ENCODE measurements at regions of chr10 and their contacts with region 1.

Region 1: DNA sequence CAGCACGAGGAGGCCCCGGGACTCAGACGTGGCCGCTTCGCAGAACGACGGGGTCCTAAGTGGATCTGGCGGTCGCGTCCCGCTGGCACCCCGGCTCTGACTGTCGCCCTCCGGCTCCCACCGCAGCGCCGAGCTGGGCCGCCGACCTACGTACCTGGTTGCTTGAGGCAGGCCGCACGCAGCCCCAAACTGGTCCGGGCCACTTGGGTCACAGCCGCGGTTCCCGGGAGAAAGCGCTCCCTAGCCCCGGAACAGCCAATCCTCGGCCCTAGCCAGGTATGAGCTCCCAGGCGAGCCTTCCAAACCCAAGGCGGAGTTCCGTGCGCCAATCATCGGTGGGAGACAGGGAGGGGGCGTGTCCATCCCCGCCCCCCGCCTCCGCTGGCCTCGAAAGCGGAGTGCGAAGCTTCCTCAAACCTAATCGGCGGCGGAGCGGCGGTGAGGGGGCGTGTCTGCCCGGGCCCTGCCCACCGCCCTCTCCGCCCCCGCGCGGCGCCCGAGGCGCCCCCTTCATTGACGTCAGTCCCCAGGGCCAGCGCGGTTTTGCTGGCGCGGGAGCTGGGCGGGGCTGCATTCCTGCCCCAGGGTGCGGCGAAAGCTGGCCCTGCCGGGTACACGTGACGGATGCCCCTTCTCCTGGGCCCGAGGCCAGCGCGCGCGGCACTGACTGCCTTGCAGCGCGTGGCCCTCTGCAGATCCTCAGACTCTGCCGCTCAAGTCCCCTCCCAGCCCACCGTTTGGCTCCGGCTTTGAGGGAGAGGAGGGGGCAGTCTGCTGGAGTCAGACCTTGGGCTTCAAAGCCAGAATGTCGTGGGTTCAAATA is at the start of gene AVPI1:
- DNase-seq: peak; percentile 96
- CTCF ChIP-seq: no peak

Region 2: GRCh38 chr10:97667463-97667980 is 19.7 kb before region 1 on chr10:
- CTCF ChIA-PET with region 1: interaction called, 13 read pairs
- POLR2A ChIA-PET with region 1: interaction called, 4 read pairs
- DNase-seq: no peak
- CTCF ChIP-seq: no peak

Region 3: DNA sequence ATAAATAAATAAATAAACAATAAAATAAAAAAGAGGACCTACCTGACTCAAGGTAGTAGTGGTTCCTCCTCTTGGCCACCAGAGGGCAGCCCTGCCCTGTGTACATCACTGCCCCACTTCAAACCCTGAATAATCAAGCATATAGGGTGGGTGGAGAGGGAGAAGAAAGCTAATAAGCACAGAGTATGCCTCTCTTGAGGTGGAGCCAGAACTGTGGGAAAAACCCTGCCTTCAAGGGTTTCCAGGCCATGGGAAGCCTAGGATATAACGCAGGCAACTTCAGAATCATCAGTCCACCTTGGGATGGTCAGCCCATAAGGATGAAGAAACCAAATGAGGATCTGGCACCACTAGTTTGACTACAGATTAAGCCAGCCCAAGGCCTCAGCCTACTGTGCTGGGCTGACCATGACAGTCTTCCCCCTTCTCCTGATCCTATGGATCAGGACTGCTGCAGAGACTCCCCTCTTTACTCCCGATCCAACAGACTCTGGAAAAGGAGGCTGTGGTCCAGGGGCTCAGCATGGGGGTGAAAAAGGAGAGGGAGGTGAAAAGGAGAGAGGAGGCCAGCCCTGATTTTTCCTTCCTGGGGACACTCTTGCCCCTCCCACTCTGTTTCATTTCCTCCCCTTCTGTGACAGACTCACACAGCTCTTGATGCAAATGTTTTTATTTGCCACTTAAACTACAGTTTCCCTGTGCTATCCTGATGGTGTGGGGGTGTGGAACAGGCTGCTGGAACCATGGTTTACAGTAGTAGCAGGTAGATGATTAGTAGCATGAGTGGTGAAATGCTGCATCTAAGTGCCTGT is 10.2 kb before region 1 on chr10:
- CTCF ChIA-PET with region 1: interaction called, 61 read pairs
- POLR2A ChIA-PET with region 1: interaction called, 3 read pairs
- DNase-seq: peak; percentile 77
- CTCF ChIP-seq: peak; percentile 69

Region 4: DNA sequence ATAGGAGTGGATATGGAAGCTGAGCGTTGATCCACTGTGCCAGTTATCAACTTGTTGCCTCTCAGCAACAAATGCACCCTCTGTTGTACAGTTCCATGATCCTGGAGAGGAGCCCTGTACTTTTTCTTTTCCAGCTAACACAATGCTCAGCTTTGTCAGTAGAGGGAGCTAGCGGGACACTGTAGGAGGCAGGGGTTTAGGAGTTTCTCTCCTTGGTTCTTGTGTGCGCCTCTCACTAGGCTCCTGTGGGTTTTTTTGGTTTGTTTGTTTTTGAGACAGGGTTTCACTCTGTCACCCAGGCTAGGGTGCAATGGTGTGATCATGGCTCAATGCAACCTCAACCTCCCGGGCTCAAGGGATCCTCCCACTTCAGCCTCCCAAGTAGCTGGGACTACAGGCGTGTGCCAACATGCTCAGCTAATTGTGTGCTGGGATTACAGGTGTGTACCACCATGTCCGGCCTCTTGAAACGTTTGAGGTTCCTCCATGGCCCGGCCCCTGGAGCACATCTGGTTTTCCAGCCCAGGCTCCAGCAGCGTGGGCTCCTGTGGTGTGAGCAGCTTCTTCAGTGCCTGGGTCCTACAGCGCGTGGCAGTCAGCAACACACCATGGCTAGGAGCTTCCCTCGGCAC is 14.4 kb after region 1 on chr10:
- CTCF ChIA-PET with region 1: interaction called, 75 read pairs
- POLR2A ChIA-PET with region 1: interaction called, 3 read pairs
- DNase-seq: peak; percentile 82
- CTCF ChIP-seq: peak; percentile 89

Region 5: GRCh38 chr10:97714048-97714371 is 26.8 kb after region 1 on chr10:
- CTCF ChIA-PET with region 1: interaction called, 21 read pairs
- POLR2A ChIA-PET with region 1: no interaction called
- DNase-seq: peak; percentile 80
- CTCF ChIP-seq: peak; percentile 28

Region 6: DNA sequence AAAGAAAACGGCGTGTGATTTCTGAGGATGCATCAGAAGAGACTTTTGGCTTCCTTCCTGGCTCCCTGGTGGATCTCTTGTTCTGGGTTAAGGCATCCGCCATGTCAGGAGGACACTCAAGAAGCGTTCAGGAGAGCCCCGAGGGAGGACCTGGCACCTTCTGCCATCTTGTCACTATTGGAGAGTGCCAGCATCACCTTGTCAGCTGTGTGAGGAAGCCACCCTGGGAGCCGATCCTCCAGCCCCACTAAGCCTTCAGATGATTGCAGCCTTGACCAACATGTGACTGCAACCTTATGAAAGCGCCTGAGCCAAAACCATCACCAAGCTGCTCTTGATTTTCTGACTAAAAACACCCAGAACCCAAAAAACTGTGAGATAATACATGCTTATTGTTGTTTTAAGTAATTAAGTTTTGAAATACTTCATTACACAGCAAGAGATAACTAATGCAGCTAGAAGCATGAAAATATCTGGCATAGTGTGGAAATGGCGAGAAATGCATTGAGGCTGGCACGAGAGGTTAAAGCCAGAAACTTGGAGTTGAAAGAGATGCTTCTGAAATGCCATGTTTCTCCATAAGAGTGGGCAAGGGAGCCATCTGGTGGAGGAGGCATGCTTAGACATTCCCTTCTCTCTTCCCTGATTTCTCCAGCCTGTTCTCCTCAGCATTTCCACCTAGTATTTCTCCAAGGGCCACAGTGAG is 44.3 kb after region 1 on chr10:
- CTCF ChIA-PET with region 1: interaction called, 60 read pairs
- POLR2A ChIA-PET with region 1: interaction called, 6 read pairs
- DNase-seq: peak; percentile 55
- CTCF ChIP-seq: peak; percentile 79

Region 7: DNA sequence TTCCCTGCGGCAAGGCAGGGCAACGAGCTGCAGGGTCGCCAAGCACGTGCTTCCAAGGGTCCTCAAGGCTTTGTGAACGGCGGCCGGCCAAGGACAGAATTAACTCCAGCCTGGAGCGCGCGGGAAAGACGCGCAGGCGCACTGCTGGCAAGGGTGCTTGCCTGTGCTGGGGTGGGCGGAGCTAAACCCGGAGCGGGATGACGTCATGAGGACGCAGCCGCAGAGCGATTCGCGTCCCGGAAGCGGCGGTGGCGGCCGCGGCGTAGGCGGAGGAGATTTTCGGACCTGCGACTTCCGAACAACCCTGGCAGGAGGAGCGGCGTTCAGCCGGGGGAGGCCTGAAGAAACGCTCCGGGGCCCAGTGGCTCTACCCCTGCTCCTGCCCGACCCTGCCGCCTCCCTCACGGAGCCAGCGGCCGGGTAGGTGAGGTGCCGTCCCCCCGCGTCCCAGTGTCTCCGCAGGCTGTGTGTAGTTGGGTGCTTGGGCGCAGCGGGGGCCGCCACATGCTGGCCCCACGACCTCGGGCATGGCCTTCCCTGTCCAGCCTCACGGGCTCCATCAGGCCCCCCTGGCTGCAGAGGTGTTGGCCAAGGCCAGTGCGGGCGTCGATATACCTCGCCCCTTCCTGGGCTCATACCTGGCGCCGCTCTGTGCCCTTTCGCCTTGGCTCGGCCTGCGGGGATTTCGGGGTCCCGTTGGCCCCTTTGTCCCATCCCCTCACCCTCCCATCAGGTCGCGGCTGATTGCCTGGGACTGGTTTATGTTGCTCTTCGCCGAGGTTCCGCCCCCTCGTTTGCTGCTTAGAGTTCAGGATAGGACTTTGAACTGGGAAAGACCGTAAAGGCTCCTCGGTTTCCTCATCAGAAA is 50.0 kb after region 1 on chr10 and contains the start of gene ZFYVE27:
- CTCF ChIA-PET with region 1: interaction called, 60 read pairs
- POLR2A ChIA-PET with region 1: interaction called, 6 read pairs
- DNase-seq: peak; percentile 99
- CTCF ChIP-seq: no peak

Region 8: GRCh38 chr10:97888641-97889262 is 201.6 kb after region 1 on chr10:
- CTCF ChIA-PET with region 1: no interaction called
- POLR2A ChIA-PET with region 1: no interaction called
- DNase-seq: no peak
- CTCF ChIP-seq: no peak

Measured in GM10248 (cell line).